H1 (cell line): ENCODE measurements at regions of chr11 and their contacts with region 1.

Region 1: GRCh38 chr11:119018074-119018938 is at the starts of genes RPS25 and TRAPPC4:
- DNase-seq: peak; percentile 88 to 90
- H3K4me3 ChIP-seq: peak within 1 kb of the TSS; percentile 93 to 99 (median 95)
- H3K27ac ChIP-seq: peak within 1 kb of the TSS; percentile 84
- H3K4me1 ChIP-seq: peaks cover 0 to 9% (median 2%) of the 10 kb centered on the region in 4 experiments; a peak in 4 of 7 replicates
- H3K27me3 ChIP-seq: no peaks in the 10 kb centered on the region
- CTCF ChIP-seq: no peak
- EP300 ChIP-seq: peak in 1 of 2 experiments; percentile 22; a peak in 1 of 3 replicates
- POLR2A ChIP-seq: peak; percentile 91 to 95
- RAD21 ChIP-seq: no peak
- total RNA-seq, gene RPS25: 1,525 and 1,551 TPM in 2 replicates
- total RNA-seq, gene TRAPPC4: 88.6 and 94.3 TPM in 2 replicates

Region 2: DNA sequence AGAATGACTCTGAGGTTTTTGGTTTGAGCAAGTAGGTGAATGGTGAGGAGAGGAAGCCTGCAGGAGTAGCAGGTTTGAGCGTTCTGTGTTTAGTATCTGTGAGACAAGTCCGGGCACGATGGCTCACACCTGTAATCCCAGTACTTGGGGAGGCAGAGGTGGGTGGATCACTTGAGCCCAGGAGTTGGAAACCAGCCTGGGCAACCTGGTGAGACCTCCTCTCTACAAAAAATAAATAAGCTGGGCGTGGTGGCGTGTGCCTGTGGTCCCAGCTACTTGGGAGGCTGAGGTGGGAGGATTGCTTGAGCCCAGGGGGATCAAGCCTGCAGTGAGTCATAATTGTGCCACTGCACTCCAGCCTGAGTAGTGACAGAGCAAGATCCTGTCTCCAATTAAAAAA is 30.0 kb before region 1 on chr11:
- CTCF ChIA-PET with region 1: interaction called, 3 read pairs
- POLR2A ChIA-PET with region 1: interaction called, 264 read pairs
- DNase-seq: no peak
- H3K4me3 ChIP-seq: no peak overlapping the region
- H3K27ac ChIP-seq: no peak overlapping the region
- H3K4me1 ChIP-seq: no peaks in the 10 kb centered on the region
- H3K27me3 ChIP-seq: no peaks in the 10 kb centered on the region
- CTCF ChIP-seq: no peak
- EP300 ChIP-seq: no peak
- POLR2A ChIP-seq: no peak
- RAD21 ChIP-seq: no peak

Region 3: DNA sequence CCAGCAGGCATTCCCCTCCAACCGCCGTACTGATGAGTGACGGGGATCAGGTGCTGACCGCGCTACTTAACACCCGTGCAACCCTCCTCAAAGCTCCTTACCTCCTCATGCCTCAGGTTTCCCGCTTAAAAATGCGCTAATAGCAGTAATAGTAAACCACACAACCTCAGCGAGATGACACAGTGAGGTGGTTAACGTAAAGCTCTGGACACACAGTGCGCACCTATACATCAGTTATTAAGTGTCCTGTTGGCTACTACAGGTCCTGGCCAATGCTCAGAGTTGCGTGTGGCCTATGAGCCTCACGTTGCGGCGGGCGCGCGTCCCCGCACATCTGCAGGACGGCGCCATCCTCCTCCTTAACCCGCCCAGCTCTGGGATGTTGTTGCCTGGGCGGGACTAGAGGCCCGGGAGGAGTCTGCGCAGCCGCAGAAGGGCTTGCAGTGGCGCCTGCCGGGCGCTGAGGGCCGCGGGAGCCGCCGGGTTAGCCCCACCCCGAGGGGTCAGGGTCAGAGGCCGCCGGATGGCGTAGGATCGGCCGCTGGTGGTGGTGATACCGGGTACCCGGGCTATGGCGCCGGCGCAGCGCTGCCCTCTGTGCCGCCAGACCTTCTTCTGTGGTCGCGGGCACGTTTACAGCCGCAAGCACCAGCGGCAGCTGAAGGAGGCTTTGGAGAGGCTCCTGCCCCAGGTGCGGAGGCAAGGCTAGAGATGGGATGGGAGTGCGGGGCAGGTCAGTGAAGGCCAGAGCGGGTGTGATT is 20.5 kb before region 1 on chr11 and contains the start of gene CENATAC:
- CTCF ChIA-PET with region 1: interaction called, 4 read pairs
- POLR2A ChIA-PET with region 1: interaction called, 264 read pairs
- DNase-seq: peak; percentile 77 to 95
- H3K4me3 ChIP-seq: peak within 1 kb of the TSS; percentile 84 to 97 (median 90)
- H3K27ac ChIP-seq: peak within 1 kb of the TSS; percentile 72
- H3K4me1 ChIP-seq: peaks cover 0 to 6% (median under 1%) of the 10 kb centered on the region in 4 experiments; a peak in 2 of 7 replicates
- H3K27me3 ChIP-seq: no peaks in the 10 kb centered on the region
- CTCF ChIP-seq: no peak
- EP300 ChIP-seq: no peak
- POLR2A ChIP-seq: peak; percentile 81 to 86; a peak in 2 of 3 replicates
- RAD21 ChIP-seq: no peak
- total RNA-seq, gene CENATAC: 33.1 and 36.4 TPM in 2 replicates

Region 4: GRCh38 chr11:119030329-119031049 is 12.2 kb after region 1 on chr11 and contains the start of gene SLC37A4:
- CTCF ChIA-PET with region 1: interaction called, 12 read pairs
- POLR2A ChIA-PET with region 1: interaction called, 224 read pairs
- DNase-seq: peak; percentile 98 to 100
- H3K4me3 ChIP-seq: peak within 1 kb of the TSS; percentile 64 to 84 (median 74)
- H3K27ac ChIP-seq: peak within 1 kb of the TSS; percentile 89
- H3K4me1 ChIP-seq: peaks cover 6 to 13% (median 10%) of the 10 kb centered on the region in 4 experiments
- H3K27me3 ChIP-seq: no peaks in the 10 kb centered on the region
- CTCF ChIP-seq: peak; percentile 77 to 98 (median 93)
- EP300 ChIP-seq: no peak
- POLR2A ChIP-seq: peak in 1 of 2 experiments; percentile 83; a peak in 2 of 3 replicates
- RAD21 ChIP-seq: peak; percentile 54 to 59
- total RNA-seq, gene SLC37A4: 29.0 and 35.1 TPM in 2 replicates

Region 5: GRCh38 chr11:119051440-119052162 is 33.3 kb after region 1 on chr11:
- CTCF ChIA-PET with region 1: interaction called, 5 read pairs
- POLR2A ChIA-PET with region 1: interaction called, 27 read pairs
- DNase-seq: no peak
- H3K4me3 ChIP-seq: no peak overlapping the region
- H3K27ac ChIP-seq: no peak overlapping the region
- H3K4me1 ChIP-seq: peaks cover 0 to 5% (median 2%) of the 10 kb centered on the region in 4 experiments; a peak in 4 of 7 replicates
- H3K27me3 ChIP-seq: no peaks in the 10 kb centered on the region
- CTCF ChIP-seq: no peak
- EP300 ChIP-seq: no peak
- POLR2A ChIP-seq: no peak; a peak in 1 of 3 replicates
- RAD21 ChIP-seq: no peak